Heart left ventricle (tissue), 16 donors: ENCODE measurements at regions of chr6 and their contacts with region 1.

Region 1: DNA sequence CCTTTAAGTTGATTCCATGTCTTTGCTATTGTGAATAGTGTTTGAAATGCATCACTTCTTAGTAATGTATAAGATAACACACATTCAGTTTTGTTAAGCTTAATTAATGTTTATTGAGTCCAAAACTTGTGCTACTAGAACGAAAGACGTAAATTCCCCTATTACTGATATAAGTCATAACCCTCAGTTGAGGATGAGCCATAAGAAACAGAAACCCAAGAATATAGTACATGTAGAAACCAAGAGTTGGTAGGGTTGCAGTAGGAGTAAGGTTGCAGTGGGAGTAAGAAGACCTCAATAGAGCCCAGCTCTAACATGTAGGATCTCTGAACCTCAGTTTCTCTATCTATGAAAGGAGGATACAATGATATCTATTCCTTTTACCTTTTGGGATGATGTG is 19.3 kb downstream of the CITED2 start:
- DNase-seq: no peak
- ATAC-seq: no peak
- H3K4me3 ChIP-seq: no peak overlapping the region
- H3K27ac ChIP-seq: no peak overlapping the region
- H3K4me1 ChIP-seq: peaks cover 0 to 10% (median 1%) of the 10 kb centered on the region in 12 donors
- H3K27me3 ChIP-seq: no peaks in the 10 kb centered on the region
- CTCF ChIP-seq: no peak
- POLR2A ChIP-seq: no peak

Region 2: DNA sequence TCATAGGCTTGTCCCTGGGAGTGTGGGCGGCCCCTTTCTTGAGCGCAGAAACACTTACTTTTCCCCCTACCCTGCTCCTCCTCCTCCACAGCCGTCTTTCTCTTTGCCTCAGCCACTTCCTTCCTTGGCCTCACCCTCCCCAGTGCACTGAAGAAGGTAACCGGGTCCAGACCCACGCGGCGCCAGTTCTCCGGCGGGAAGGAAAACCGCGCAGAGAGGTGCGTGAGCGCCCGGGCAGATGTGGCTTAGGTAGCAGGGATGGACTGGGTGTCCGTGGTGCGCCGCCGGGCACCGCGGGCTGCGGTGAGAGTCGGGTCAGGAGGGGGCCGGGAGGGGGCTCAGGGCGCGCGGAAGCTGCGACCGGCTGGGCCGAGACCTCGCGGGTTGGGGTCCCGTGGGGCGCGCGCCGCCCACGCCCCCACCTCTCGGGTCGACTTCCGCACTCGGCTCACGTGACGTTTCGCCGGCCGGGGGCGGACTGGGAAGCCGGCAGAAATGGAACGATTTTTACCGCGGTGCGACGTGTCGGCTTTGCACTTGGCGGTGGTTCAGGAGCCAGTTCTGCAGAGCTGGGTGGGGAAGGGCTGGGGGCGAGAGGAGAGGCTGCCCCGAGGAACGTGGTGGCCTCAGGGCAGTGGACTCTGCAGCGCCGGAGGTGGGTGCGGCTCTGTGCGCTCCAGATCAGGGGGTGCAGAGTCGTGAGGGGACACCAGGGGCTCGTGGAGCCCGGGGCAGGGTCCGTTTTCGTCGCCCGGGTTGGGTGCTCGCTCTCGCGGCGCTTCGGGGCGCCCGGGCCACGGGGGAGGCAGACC is 326.3 kb before region 1 on chr6 and contains the start of gene ABRACL:
- intact Hi-C with region 1: loop called in 1 of 10 experiments (anchors 10 kb)
- DNase-seq: peak; percentile 58 to 78 (median 66)
- ATAC-seq: peak; percentile 47 to 79 (median 76)
- H3K4me3 ChIP-seq: peak within 1 kb of the TSS; percentile 68 to 98 (median 93)
- H3K27ac ChIP-seq: peak within 1 kb of the TSS; percentile 11 to 97 (median 88)
- H3K4me1 ChIP-seq: peaks cover 0 to 46% (median 10%) of the 10 kb centered on the region in 12 donors
- H3K27me3 ChIP-seq: no peaks in the 10 kb centered on the region
- CTCF ChIP-seq: no peak
- POLR2A ChIP-seq: no peak
- total RNA-seq, gene ABRACL: 3.2 to 26.3 (median 7.6) TPM

Region 3: GRCh38 chr6:139124887-139125672 is 230.1 kb before region 1 on chr6:
- intact Hi-C with region 1: loop called in 5 of 10 experiments (anchors 2 to 5 kb)
- DNase-seq: peak; percentile 60 to 66 (median 60)
- ATAC-seq: peak; percentile 96 to 99 (median 98)
- H3K4me3 ChIP-seq: no peak overlapping the region
- H3K27ac ChIP-seq: peak overlapping the region in 5 of 12 donors; percentile 19 to 73 (median 35)
- H3K4me1 ChIP-seq: peaks cover 0 to 23% (median 4%) of the 10 kb centered on the region in 12 donors
- H3K27me3 ChIP-seq: no peaks in the 10 kb centered on the region
- CTCF ChIP-seq: peak; percentile 32 to 76 (median 59)
- POLR2A ChIP-seq: no peak

Region 4: DNA sequence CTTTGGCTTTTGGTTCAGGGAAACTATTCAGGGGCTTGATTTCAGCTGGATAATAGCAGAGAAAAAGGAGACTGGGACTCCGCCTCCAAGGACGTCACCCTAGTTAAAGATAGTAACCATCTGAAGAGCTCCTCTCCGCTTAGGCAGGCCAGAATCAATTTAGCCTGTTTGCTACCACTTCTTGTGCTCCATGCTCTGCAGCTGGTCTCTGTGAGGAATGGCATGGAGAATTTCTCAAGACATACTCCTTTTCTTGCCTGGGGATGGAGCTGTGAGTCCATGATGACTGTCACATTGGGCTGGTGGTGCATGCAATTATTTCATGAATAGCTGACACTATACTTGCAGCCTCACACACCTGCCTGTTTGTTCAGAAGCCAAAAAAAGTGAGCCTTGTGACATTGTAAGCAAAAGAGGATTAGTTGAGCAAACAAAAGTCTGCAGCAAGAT is 124.8 kb before region 1 on chr6:
- intact Hi-C with region 1: loop called in 3 of 10 experiments (anchors 5 kb)
- DNase-seq: no peak
- ATAC-seq: peak; percentile 47 to 77 (median 52)
- H3K4me3 ChIP-seq: no peak overlapping the region
- H3K27ac ChIP-seq: no peak overlapping the region
- H3K4me1 ChIP-seq: peaks cover 0 to 13% (median 0%) of the 10 kb centered on the region in 12 donors
- H3K27me3 ChIP-seq: no peaks in the 10 kb centered on the region
- CTCF ChIP-seq: peak in 3 of 12 donors; percentile 9 to 21 (median 10)
- POLR2A ChIP-seq: no peak

Region 5: GRCh38 chr6:139262519-139263300 is 92.5 kb before region 1 on chr6:
- intact Hi-C with region 1: no loop called
- DNase-seq: no peak
- ATAC-seq: no peak
- H3K4me3 ChIP-seq: no peak overlapping the region
- H3K27ac ChIP-seq: peak overlapping the region in 1 of 12 donors; percentile 18
- H3K4me1 ChIP-seq: peaks cover 0 to 8% (median 3%) of the 10 kb centered on the region in 12 donors
- H3K27me3 ChIP-seq: no peaks in the 10 kb centered on the region
- CTCF ChIP-seq: no peak
- POLR2A ChIP-seq: no peak